ENCODE measurements at regions of chr13 and their contacts with region 1.

Region 1: GRCh38 chr13:29707876-29708543 is 112.5 kb upstream of the SLC7A1 start:
- DNase-seq: no peak
- ATAC-seq: peak; percentile 87
- H3K4me3 ChIP-seq: no peak overlapping the region
- H3K27ac ChIP-seq: no peak overlapping the region
- H3K4me1 ChIP-seq: no peaks in the 10 kb centered on the region
- H3K27me3 ChIP-seq: peaks cover 0 to 10% of the 10 kb centered on the region in 2 donors
- CTCF ChIP-seq: no peak

Region 2: DNA sequence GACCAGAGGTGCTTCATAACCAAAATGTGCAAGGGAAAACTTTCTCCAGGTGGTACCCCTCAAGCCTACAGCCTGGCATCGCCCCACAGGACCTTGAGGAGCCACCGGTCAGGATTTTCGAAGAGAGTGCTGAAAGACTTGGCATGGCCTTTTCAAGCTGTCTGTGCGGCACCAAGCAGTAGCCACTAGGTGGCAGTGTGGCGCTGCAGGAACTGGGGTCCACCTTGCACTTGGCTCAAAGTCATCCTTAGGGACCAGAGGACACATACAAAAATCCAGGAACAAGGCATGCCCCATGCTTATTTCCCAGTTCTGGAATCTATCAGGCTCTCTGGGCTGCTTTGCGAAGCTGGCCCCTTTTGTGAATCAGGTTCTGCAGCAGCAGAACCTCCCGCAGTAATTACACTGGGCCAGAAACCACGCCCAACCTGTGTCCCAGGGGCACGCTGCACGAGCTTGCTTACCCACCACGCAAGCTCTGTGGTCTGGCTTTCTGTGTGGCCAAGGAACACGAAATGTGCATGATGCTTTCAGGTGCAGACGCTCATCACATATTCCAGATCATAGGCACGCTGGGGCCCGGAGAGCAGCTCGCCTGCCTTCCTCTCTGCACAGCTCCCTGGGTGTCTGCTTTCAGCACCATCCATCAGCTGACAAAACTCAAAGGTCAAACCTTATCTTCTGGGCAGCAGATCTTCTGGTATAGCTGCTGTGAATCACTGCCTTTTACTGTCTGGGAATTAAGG is 199.7 kb before region 1 on chr13:
- intact Hi-C with region 1: loop called in 1 of 2 experiments (anchors 10 kb)
- DNase-seq: peak; percentile 75 to 92 (median 82)
- ATAC-seq: peak; percentile 93
- H3K4me3 ChIP-seq: no peak overlapping the region
- H3K27ac ChIP-seq: no peak overlapping the region
- H3K4me1 ChIP-seq: no peaks in the 10 kb centered on the region
- H3K27me3 ChIP-seq: peaks cover 0 to 36% of the 10 kb centered on the region in 2 donors
- CTCF ChIP-seq: peak; percentile 97 to 98

Region 3: GRCh38 chr13:29810145-29810742 is 102.2 kb after region 1 on chr13:
- intact Hi-C with region 1: no loop called
- DNase-seq: peak in 2 of 4 donors; percentile 10 to 21
- ATAC-seq: peak; percentile 67
- H3K4me3 ChIP-seq: no peak overlapping the region
- H3K27ac ChIP-seq: peak overlapping the region in 1 of 2 donors; percentile 3
- H3K4me1 ChIP-seq: peaks cover 5 to 18% of the 10 kb centered on the region in 2 donors
- H3K27me3 ChIP-seq: no peaks in the 10 kb centered on the region
- CTCF ChIP-seq: no peak